PC-9 (cell line): ENCODE measurements at regions of chr15 and their contacts with region 1.

Region 1: DNA sequence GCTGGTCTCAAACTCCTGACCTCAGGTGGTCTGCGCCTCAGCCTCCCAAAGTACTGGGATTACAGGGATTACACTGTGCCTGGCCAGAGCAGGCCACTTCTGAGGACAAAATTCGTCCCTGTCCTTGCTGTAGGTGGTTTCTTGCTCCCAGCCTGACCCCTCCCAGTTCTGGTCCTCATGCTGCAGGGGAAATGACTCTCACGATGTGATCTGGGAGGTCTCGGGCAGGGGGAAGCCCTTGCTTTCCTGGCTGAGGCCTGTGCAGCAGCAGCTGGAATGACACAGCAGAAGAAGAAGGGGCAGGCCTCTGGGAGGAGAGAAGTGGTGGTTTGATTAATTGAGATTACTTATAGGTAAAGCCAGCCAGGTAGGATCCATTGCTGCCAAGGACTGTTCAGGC is 39.3 kb downstream of the MEGF11 start:
- DNase-seq: no peak
- H3K4me3 ChIP-seq: no peak overlapping the region
- H3K27ac ChIP-seq: no peak overlapping the region
- H3K4me1 ChIP-seq: no peaks in the 10 kb centered on the region
- H3K27me3 ChIP-seq: peaks cover 19% of the 10 kb centered on the region
- CTCF ChIP-seq: no peak

Region 2: GRCh38 chr15:65909831-65910230 is 304.4 kb before region 1 on chr15:
- CTCF ChIA-PET with region 1: interaction called, 18 read pairs
- POLR2A ChIA-PET with region 1: no interaction called
- intact Hi-C with region 1: no loop called
- DNase-seq: no peak
- H3K4me3 ChIP-seq: no peak overlapping the region
- H3K27ac ChIP-seq: no peak overlapping the region
- H3K4me1 ChIP-seq: peaks cover 30% of the 10 kb centered on the region
- H3K27me3 ChIP-seq: no peaks in the 10 kb centered on the region
- CTCF ChIP-seq: no peak